GM12878 (cell line): ENCODE measurements at regions of chr10 and their contacts with region 1.

Region 1: GRCh38 chr10:56662765-56663447 is 301.8 kb upstream of the ZWINT start:
- DNase-seq: no peak
- ATAC-seq: peak; percentile 98
- H3K4me3 ChIP-seq: no peak overlapping the region
- H3K27ac ChIP-seq: no peak overlapping the region
- H3K4me1 ChIP-seq: no peaks in the 10 kb centered on the region
- H3K27me3 ChIP-seq: no peaks in the 10 kb centered on the region
- CTCF ChIP-seq: no peak
- EP300 ChIP-seq: no peak
- POLR2A ChIP-seq: no peak
- RAD21 ChIP-seq: no peak

Region 2: DNA sequence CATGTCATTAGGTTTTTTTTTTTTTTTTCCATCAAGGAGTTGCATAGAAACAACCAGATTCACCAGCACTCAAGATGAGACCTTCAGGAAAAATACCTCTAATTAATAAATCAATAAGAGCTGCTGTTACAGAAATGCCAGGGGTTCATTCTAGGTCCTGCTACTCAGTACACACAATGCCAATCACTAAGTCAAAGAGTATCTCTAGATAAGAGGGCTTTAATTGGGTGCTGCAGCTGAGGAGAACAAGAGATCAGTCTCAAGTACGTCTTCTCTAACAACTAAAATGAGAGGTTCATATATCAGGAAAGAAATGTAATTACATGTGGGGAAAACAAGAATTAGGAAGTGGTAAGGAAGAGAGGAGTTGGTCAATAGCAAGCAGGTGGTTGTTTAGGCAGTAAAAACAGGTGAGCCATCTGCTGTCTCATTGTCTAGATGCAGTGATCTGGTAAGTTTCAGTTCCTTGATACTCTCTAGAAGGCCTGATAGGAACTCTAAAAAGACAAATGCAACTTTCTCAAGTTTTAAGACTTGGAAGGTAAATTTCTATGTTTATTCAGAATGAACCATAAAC is 28.9 kb before region 1 on chr10:
- CTCF ChIA-PET with region 1: interaction called, 3 read pairs
- POLR2A ChIA-PET with region 1: no interaction called
- RAD21 ChIA-PET with region 1: interaction called, 3 read pairs
- SMC1A ChIA-PET with region 1: no interaction called
- in situ Hi-C with region 1: no loop called
- intact Hi-C with region 1: loop called (anchors 2 kb)
- DNase-seq: peak; percentile 59
- ATAC-seq: peak; percentile 99
- H3K4me3 ChIP-seq: 0 out of 2 replicates have a peak overlapping the region, but pooled peaks have one; percentile 6
- H3K27ac ChIP-seq: peak overlapping the region; percentile 73
- H3K4me1 ChIP-seq: peaks cover 19% of the 10 kb centered on the region
- H3K27me3 ChIP-seq: no peaks in the 10 kb centered on the region
- CTCF ChIP-seq: no peak
- EP300 ChIP-seq: peak; percentile 79 to 96
- POLR2A ChIP-seq: no peak
- RAD21 ChIP-seq: no peak

Region 3: GRCh38 chr10:56715262-56715661 is 52.4 kb after region 1 on chr10:
- CTCF ChIA-PET with region 1: interaction called, 3 read pairs
- POLR2A ChIA-PET with region 1: no interaction called
- RAD21 ChIA-PET with region 1: no interaction called
- SMC1A ChIA-PET with region 1: no interaction called
- in situ Hi-C with region 1: no loop called
- intact Hi-C with region 1: loop called (anchors 5 kb)
- DNase-seq: no peak
- ATAC-seq: peak; percentile 50; the same call in 2 of the 3 replicates
- H3K4me3 ChIP-seq: no peak overlapping the region
- H3K27ac ChIP-seq: no peak overlapping the region
- H3K4me1 ChIP-seq: no peaks in the 10 kb centered on the region
- H3K27me3 ChIP-seq: no peaks in the 10 kb centered on the region
- CTCF ChIP-seq: no peak
- EP300 ChIP-seq: no peak
- POLR2A ChIP-seq: no peak
- RAD21 ChIP-seq: no peak